ENCODE measurements at regions of chr2 and their contacts with region 1.

Region 1: DNA sequence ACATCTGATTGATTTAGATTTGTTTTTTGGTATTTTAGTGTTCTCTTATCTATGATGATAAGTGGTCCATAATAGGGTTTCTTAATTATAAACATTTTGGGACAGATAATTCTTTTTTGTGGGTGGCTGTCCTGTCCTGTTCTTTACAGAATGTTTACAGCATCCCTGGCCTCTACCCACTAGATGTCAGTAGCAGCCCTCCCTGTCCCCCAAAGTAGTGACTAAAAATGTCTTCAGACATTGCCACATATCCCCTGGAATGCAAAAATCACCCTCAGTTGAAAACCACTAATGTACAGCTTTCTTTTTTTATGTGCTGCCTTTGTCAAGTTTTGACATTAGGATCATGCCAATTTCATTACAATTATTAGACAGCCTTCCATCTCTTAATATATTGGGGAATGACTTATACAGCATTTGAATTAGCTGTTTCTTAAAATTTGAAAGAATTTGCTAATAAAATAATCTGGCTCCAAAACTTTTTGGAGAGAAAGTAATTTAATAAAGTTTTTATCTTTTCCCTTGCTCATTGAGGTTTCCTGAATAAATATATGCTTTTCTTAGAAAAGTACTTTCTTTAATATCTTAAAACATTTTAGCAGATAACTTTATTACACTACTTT is 19.5 kb downstream of the WIPF1 start:
- DNase-seq: peak in 1 of 4 experiments; percentile 44
- ATAC-seq: peak; percentile 72
- H3K4me3 ChIP-seq: no peak overlapping the region
- H3K27ac ChIP-seq: no peak overlapping the region
- H3K4me1 ChIP-seq: no peaks in the 10 kb centered on the region
- H3K27me3 ChIP-seq: no peaks in the 10 kb centered on the region
- CTCF ChIP-seq: peak; percentile 35 to 72 (median 57); a peak in 4 of 6 replicates
- EP300 ChIP-seq: no peak
- POLR2A ChIP-seq: no peak
- RAD21 ChIP-seq: peak; percentile 68 to 87

Region 2: DNA sequence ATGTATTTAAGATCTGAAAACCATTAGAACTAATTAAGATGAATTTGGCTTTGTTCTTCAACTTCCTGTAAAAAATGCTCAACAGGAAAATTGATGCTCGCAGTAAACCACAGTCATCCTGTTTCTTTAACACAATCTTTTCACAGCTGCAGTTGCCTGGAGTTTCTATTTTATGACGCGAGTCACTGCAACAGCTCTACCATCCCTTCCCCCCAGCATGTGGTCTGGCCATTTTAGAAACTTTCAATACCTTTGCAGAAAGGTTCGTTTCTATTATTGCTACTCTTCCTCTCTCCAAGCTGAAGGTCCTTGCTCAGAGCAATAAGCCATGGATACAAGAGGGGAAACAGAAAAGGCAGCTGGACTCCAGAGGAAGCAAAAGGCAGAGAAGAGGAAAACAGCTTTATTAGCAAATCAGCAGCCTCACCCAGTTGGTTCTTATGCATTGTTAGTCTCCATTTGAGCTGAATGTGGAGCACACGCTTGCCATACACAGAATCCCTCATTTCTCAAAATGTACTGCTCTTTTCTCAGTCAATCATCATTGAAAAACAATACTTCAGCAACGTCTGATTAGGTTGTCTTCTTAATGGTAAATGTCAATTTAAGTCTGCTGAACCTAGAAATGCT is 15.6 kb after region 1 on chr2:
- CTCF ChIA-PET with region 1: no interaction called
- POLR2A ChIA-PET with region 1: interaction called, 4 read pairs
- in situ Hi-C with region 1: no loop called
- intact Hi-C with region 1: loop called (anchors 2 kb)
- DNase-seq: peak in 1 of 4 experiments; percentile 32
- ATAC-seq: no peak
- H3K4me3 ChIP-seq: no peak overlapping the region
- H3K27ac ChIP-seq: no peak overlapping the region
- H3K4me1 ChIP-seq: peaks cover 0 to 9% of the 10 kb centered on the region in 2 experiments; a peak in 3 of 5 replicates
- H3K27me3 ChIP-seq: peaks cover 0 to 10% of the 10 kb centered on the region in 2 experiments; a peak in 1 of 5 replicates
- CTCF ChIP-seq: no peak
- EP300 ChIP-seq: no peak
- POLR2A ChIP-seq: no peak
- RAD21 ChIP-seq: no peak

Region 3: GRCh38 chr2:174635015-174635593 is 57.0 kb after region 1 on chr2:
- CTCF ChIA-PET with region 1: no interaction called
- POLR2A ChIA-PET with region 1: no interaction called
- in situ Hi-C with region 1: no loop called
- intact Hi-C with region 1: no loop called
- DNase-seq: no peak
- ATAC-seq: peak; percentile 26
- H3K4me3 ChIP-seq: no peak overlapping the region
- H3K27ac ChIP-seq: peak overlapping the region; percentile 61; the same call in 1 of the 3 replicates
- H3K4me1 ChIP-seq: peaks cover 12 to 27% of the 10 kb centered on the region in 2 experiments; a peak in 4 of 5 replicates
- H3K27me3 ChIP-seq: no peaks in the 10 kb centered on the region
- CTCF ChIP-seq: peak in 1 of 3 experiments; percentile 8; a peak in 1 of 6 replicates
- EP300 ChIP-seq: no peak
- POLR2A ChIP-seq: no peak
- RAD21 ChIP-seq: no peak

Region 4: GRCh38 chr2:174688079-174688478 is 110.0 kb after region 1 on chr2:
- CTCF ChIA-PET with region 1: interaction called, 4 read pairs
- POLR2A ChIA-PET with region 1: no interaction called
- in situ Hi-C with region 1: no loop called
- intact Hi-C with region 1: loop called (anchors 1 kb)
- DNase-seq: peak in 1 of 4 experiments; percentile 37
- ATAC-seq: peak; percentile 70; the same call in 2 of the 3 replicates
- H3K4me3 ChIP-seq: no peak overlapping the region
- H3K27ac ChIP-seq: no peak overlapping the region
- H3K4me1 ChIP-seq: no peaks in the 10 kb centered on the region
- H3K27me3 ChIP-seq: peaks cover 11 to 19% of the 10 kb centered on the region in 2 experiments; a peak in 3 of 5 replicates
- CTCF ChIP-seq: peak; percentile 24 to 67 (median 44); a peak in 4 of 6 replicates
- EP300 ChIP-seq: no peak
- POLR2A ChIP-seq: no peak
- RAD21 ChIP-seq: peak; percentile 56 to 82

Region 5: DNA sequence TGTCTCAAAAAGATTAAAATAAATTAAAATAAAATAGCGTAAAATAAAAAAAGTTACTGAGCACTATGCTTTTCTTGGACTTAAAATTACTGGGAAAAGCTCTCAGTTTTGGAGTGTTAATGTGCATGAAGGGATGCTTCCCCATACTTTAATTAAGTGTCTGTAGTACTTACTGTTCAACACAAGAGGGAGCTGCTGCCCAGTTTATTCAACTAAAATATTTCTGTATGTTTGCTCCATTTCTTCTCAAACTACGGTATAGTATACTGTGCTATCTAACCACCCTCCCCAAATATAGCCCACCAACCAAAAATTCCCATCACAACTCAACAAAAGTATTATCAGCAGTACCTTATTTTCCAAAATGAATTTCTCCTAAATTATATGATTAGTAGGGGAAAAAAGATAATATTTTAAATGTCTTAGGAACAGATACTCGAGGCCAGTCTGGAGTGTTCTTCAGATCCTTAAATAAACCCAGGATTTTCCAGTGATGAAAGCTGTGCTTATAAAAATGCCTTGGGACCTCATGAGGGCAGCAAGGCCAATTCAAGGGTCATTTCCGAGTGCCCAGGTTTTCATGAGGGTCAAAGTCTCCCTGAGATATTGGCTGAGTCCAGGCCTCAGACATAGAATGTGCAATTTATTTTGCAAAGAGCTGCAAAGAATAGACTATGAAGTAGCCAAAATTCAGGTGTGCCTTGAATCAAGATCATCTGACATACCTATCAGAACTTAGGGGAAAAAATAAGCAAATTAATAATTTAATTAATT is 122.1 kb after region 1 on chr2:
- CTCF ChIA-PET with region 1: no interaction called
- POLR2A ChIA-PET with region 1: no interaction called
- in situ Hi-C with region 1: no loop called
- intact Hi-C with region 1: no loop called
- DNase-seq: peak; percentile 63 to 70 (median 68)
- ATAC-seq: peak; percentile 82
- H3K4me3 ChIP-seq: no peak overlapping the region
- H3K27ac ChIP-seq: no peak overlapping the region
- H3K4me1 ChIP-seq: no peaks in the 10 kb centered on the region
- H3K27me3 ChIP-seq: peaks cover 4 to 19% of the 10 kb centered on the region in 2 experiments; a peak in 3 of 5 replicates
- CTCF ChIP-seq: peak; percentile 55 to 79 (median 57); a peak in 5 of 6 replicates
- EP300 ChIP-seq: no peak
- POLR2A ChIP-seq: no peak
- RAD21 ChIP-seq: peak; percentile 63 to 82; a peak in 3 of 4 replicates

Measured in K562 (cell line).